Mammary epithelial cell (primary cell): ENCODE measurements at regions of chr16 and their contacts with region 1.

Region 1: DNA sequence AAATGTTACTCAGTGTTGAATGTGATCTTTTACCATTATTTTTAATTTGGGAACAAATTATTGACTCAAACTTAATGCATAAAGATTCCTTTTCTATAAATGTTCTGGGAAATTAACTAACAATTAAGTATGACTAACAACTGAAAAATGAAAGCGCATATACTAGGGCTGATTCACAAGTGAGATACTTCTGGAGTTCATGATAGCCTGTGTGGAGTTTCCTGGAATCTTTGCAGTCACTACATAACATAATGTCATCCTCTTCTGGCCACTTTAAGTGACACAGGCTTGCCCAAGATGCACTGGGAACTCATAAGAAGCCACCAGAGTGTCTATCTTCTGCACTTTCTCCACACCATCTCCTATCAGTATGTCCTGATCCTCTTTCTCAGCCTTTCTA is 450.3 kb upstream of the CDH11 start:
- DNase-seq: peak; percentile 62
- H3K4me3 ChIP-seq: no peak overlapping the region
- H3K27ac ChIP-seq: no peak overlapping the region
- H3K4me1 ChIP-seq: peaks cover 10% of the 10 kb centered on the region
- H3K27me3 ChIP-seq: no peaks in the 10 kb centered on the region
- CTCF ChIP-seq: no peak

Region 2: DNA sequence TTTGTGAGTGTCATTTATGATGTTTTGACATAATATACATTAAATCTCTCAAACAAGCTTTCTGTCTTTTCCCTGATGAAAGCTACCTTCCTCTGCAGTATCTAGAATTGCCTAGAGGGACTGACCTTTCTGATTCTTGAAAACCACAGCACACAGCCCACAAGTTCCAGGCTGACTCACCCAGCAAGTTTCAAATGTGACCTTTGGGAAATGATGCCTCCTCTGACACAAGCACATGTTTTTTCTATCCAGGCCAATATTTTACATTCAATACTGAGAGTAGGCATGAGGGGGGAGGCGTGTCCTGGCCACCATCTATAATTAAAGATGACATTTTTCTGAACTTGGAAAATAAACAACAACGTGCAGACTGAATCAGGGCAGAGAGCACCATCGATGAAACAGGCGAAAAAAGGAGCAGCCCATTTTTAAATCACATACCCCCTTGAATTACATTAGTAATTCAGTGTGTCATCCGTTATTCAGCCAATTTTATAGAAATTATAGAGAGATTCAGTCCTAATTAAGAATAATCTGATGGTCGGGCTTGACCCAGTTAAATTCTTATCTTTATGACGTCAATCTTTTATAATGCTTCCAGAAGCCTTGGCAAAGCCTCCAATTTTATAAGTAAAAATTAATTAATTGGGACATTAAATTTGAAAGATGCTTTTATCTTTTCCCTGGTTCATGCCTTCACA is 157.7 kb before region 1 on chr16:
- CTCF ChIA-PET with region 1: no interaction called
- dilution Hi-C with region 1: no loop called
- in situ Hi-C with region 1: no loop called
- intact Hi-C with region 1: loop called (anchors 10 kb)
- DNase-seq: peak; percentile 82
- H3K4me3 ChIP-seq: no peak overlapping the region
- H3K27ac ChIP-seq: no peak overlapping the region
- H3K4me1 ChIP-seq: peaks cover 40% of the 10 kb centered on the region
- H3K27me3 ChIP-seq: no peaks in the 10 kb centered on the region
- CTCF ChIP-seq: no peak

Region 3: DNA sequence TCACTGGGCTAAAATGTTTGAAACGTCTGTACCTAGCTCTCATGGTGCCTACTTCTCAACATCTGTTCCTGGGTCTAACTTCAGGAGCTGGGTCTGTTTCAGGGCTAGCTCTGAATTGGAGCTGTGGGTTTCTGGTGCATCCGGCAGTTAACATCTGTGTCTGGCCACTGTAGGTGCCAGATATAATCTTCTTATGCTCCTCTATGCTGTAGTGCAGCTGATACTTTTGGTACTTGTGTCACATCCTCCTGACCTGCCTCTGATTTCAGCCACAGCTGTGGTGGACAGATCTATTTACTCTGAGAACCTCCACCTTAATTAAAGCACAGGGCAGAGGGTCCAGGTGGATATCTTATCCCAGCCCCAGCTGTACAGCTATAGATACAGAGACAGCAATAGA is 46.2 kb after region 1 on chr16:
- CTCF ChIA-PET with region 1: no interaction called
- dilution Hi-C with region 1: loop called (anchors 5 kb)
- in situ Hi-C with region 1: no loop called
- intact Hi-C with region 1: no loop called
- DNase-seq: no peak
- H3K4me3 ChIP-seq: no peak overlapping the region
- H3K27ac ChIP-seq: no peak overlapping the region
- H3K4me1 ChIP-seq: no peaks in the 10 kb centered on the region
- H3K27me3 ChIP-seq: no peaks in the 10 kb centered on the region
- CTCF ChIP-seq: no peak